Sigmoid colon (tissue), 7 donors: ENCODE measurements at regions of chr7 and their contacts with region 1.

Region 1: DNA sequence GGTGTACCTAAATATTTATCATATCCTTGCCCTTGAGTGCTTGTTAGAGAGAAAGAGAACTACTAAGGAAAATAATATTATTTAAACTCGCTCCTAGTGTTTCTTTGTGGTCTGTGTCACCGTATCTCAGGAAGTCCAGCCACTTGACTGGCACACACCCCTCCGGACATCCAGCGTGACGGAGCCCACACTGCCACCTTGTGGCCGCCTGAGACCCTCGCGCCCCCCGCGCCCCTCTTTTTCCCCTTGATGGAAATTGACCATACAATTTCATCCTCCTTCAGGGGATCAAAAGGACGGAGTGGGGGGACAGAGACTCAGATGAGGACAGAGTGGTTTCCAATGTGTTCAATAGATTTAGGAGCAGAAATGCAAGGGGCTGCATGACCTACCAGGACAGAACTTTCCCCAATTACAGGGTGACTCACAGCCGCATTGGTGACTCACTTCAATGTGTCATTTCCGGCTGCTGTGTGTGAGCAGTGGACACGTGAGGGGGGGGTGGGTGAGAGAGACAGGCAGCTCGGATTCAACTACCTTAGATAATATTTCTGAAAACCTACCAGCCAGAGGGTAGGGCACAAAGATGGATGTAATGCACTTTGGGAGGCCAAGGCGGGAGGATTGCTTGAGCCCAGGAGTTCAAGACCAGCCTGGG is 11.4 kb downstream of the SERPINE1 start:
- DNase-seq: peak; percentile 94
- H3K4me3 ChIP-seq: peak overlapping the region in 3 of 4 donors; percentile 1 to 13 (median 6)
- H3K27ac ChIP-seq: peak overlapping the region in 3 of 4 donors; percentile 42 to 67 (median 59)
- H3K4me1 ChIP-seq: peaks cover 0 to 13% (median 9%) of the 10 kb centered on the region in 4 donors
- H3K27me3 ChIP-seq: peaks cover 0 to 10% (median 0%) of the 10 kb centered on the region in 3 donors
- CTCF ChIP-seq: peak; percentile 67 to 84 (median 74)
- EP300 ChIP-seq: peak in 1 of 4 donors; percentile 28
- POLR2A ChIP-seq: no peak

Region 2: DNA sequence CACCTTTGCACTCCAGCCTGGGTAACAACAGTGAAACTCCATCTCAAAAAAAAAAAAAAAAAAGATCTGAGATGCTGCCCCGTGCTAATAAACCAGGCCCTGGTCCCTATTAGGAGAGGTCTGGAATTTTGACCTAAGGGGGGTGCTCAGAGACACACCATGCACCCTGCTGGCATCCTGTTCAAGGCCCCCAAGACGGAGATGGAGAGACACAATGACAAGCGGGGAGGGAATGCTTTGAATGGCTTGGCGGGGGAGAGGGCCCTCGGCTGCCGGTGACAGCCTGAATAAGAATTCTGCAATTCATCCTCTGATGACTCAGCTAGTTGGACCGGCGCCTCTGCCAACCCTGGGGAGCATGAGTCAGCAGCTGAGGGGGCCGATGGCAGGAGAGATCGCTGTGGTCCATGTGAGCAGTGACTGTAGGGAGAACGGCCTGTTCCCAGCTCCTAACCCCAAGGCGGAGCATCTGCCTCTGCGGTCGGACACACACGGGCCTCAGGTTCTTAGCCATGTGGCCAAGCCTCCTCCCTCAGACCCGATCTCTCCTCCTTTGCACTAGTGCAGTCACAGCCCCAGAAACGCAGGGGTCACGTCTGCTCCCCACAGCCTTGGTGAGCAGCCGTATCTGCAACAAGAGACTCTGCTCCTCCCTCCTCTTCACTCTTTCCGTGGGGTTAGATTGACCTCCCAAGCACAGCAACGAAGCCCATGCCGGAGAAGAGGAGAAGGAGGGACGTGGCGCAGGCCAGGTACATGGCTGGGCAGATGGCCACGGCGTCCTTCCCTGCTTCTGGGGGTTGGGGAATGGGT is 38.2 kb before region 1 on chr7:
- intact Hi-C with region 1: loop called (anchors 5 kb)
- DNase-seq: peak; percentile 98
- H3K4me3 ChIP-seq: no peak overlapping the region
- H3K27ac ChIP-seq: peak overlapping the region; percentile 77 to 85 (median 82)
- H3K4me1 ChIP-seq: peaks cover 0 to 26% (median 18%) of the 10 kb centered on the region in 4 donors
- H3K27me3 ChIP-seq: no peaks in the 10 kb centered on the region
- CTCF ChIP-seq: no peak
- EP300 ChIP-seq: peak in 2 of 4 donors; percentile 77 to 84
- POLR2A ChIP-seq: no peak

Region 3: DNA sequence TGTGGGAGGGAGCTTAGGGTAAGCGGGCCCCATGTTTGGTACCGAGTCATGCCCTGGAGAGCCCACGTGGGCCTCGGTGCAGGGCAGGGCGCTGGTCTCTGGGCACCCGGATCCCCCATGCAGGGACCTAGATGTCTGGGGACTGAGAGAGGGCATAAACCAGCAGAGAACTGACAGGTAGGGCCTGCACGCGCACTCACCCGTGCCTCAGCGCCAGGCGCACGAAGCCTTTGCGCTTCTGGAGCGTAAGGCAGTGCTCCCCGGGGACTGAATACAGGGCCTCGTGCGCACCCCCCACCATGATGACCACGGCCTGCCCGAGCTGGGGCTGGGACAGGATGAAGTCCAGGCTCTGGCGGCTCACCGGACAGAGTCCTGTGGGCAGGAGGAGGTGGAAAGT is 59.6 kb after region 1 on chr7:
- intact Hi-C with region 1: loop called (anchors 10 kb)
- DNase-seq: no peak
- H3K4me3 ChIP-seq: no peak overlapping the region
- H3K27ac ChIP-seq: no peak overlapping the region
- H3K4me1 ChIP-seq: peaks cover 0 to 11% (median 10%) of the 10 kb centered on the region in 4 donors
- H3K27me3 ChIP-seq: peaks cover 19 to 92% (median 33%) of the 10 kb centered on the region in 3 donors
- CTCF ChIP-seq: no peak
- EP300 ChIP-seq: no peak
- POLR2A ChIP-seq: no peak